ENCODE measurements at regions of chr1 and their contacts with region 1.

Region 1: GRCh38 chr1:64823691-64824476 is 79.0 kb downstream of the RAVER2 start:
- DNase-seq: peak in 1 of 2 experiments; percentile 70
- H3K4me3 ChIP-seq: no peak overlapping the region
- H3K27ac ChIP-seq: no peak overlapping the region
- H3K4me1 ChIP-seq: peaks cover 0 to 2% (median 0%) of the 10 kb centered on the region in 4 experiments; a peak in 1 of 7 replicates
- H3K27me3 ChIP-seq: no peaks in the 10 kb centered on the region
- CTCF ChIP-seq: peak in 2 of 3 experiments; percentile 67 to 82; a peak in 3 of 4 replicates
- EP300 ChIP-seq: no peak
- POLR2A ChIP-seq: no peak
- RAD21 ChIP-seq: peak; percentile 89 to 91

Region 2: DNA sequence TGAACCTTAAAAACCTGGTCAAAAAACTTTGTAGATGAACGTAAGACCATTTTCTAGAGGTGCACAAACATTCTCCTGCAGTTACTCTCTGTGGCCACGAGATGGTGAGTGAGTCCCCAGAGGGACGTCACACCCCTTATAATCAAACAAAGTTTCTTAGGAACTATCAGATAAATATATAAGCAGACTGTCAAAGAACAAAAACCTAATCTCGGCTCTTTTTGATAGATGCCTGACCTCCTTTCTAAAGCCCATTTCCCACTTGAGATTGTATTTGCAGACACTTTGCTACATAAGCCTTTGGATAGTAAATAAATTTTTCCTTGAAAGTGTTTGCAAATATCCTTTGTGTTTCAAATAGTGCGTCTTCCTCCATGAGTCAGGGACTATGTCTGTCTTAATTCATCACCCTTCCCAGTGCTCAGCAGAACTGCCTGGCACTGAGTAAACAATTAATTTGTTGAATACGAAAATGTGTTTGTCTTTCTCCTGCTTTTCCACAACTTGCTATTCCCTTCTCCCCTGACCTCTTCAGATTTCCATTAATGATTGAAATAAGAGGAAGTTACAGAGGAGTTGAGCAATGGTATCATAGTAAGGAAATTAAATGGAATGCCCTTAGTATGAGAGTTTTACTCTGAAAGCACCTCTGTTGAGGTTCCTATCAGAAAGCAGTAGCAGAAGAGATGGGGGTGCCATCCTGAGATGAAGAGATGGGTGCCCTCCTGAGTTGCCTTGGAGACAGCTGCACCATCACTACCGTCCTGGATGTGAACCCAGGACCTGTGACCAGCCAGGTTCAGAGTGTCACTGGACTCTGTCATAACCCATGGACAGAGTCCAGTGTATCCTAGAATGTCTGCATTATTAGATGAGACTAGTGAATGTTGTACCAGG is 136.8 kb before region 1 on chr1:
- CTCF ChIA-PET with region 1: interaction called, 26 read pairs
- POLR2A ChIA-PET with region 1: interaction called, 3 read pairs
- DNase-seq: no peak
- H3K4me3 ChIP-seq: no peak overlapping the region
- H3K27ac ChIP-seq: no peak overlapping the region
- H3K4me1 ChIP-seq: peaks cover 0 to 5% (median 2%) of the 10 kb centered on the region in 4 experiments; a peak in 3 of 7 replicates
- H3K27me3 ChIP-seq: no peaks in the 10 kb centered on the region
- CTCF ChIP-seq: peak; percentile 56 to 66 (median 58)
- EP300 ChIP-seq: no peak
- POLR2A ChIP-seq: no peak
- RAD21 ChIP-seq: peak; percentile 67 to 70

Region 3: GRCh38 chr1:64834734-64835133 is 10.8 kb after region 1 on chr1:
- CTCF ChIA-PET with region 1: interaction called, 20 read pairs
- POLR2A ChIA-PET with region 1: no interaction called
- DNase-seq: no peak
- H3K4me3 ChIP-seq: no peak overlapping the region
- H3K27ac ChIP-seq: no peak overlapping the region
- H3K4me1 ChIP-seq: peaks cover 0 to 6% (median 0%) of the 10 kb centered on the region in 4 experiments; a peak in 2 of 7 replicates
- H3K27me3 ChIP-seq: no peaks in the 10 kb centered on the region
- CTCF ChIP-seq: no peak
- EP300 ChIP-seq: no peak
- POLR2A ChIP-seq: no peak
- RAD21 ChIP-seq: no peak